SK-N-SH (cell line): ENCODE measurements at regions of chr5 and their contacts with region 1.

Region 1: GRCh38 chr5:140840978-140841959 is at the start of gene PCDHA8:
- DNase-seq: peak; percentile 83
- H3K4me3 ChIP-seq: peak within 1 kb of the TSS; percentile 66 to 96
- H3K27ac ChIP-seq: peak within 1 kb of the TSS in 1 of 2 experiments; percentile 50; a peak in 1 of 4 replicates
- H3K4me1 ChIP-seq: no peaks in the 10 kb centered on the region
- H3K27me3 ChIP-seq: no peaks in the 10 kb centered on the region
- CTCF ChIP-seq: peak; percentile 87
- EP300 ChIP-seq: no peak
- RAD21 ChIP-seq: peak; percentile 92
- polyA plus RNA-seq, gene PCDHA8: 0.54 and 0.63 TPM in 2 replicates

Region 2: DNA sequence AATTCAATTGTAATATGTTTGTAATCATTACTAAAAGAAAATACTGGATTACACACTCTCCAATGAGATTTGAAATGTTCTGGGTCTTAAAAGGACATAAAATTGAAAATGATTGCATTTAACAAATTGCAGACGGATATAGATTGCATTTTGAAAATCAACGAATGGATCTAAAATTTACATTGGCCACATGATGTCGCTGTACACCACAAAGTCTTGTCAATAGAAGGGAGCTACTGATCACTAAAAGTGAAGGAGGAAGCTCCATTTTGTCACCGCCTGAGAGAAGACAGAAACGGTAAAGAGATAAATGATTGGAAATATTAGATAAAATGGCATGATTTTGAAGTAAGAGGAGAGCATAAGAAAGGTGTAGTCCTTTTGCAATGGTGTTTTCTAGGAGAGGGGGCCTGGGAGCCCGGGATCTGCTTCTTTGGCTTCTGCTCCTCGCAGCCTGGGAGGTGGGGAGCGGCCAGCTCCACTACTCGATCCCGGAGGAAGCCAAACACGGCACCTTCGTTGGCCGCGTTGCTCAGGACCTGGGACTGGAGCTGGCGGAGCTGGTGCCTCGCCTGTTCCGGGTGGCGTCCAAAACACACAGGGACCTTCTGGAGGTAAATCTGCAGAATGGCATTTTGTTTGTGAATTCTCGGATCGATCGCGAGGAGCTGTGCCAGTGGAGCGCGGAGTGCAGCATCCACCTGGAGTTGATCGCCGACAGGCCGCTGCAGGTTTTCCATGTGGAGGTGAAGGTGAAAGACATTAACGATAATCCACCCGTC is 55.2 kb before region 1 on chr5 and contains the start of gene PCDHA1:
- CTCF ChIA-PET with region 1: interaction called, 28 read pairs
- POLR2A ChIA-PET with region 1: no interaction called
- DNase-seq: peak; percentile 36
- H3K4me3 ChIP-seq: peak within 1 kb of the TSS in 1 of 2 experiments; percentile 31; a peak in 2 of 4 replicates
- H3K27ac ChIP-seq: no peak within 1 kb of the TSS
- H3K4me1 ChIP-seq: no peaks in the 10 kb centered on the region
- H3K27me3 ChIP-seq: no peaks in the 10 kb centered on the region
- CTCF ChIP-seq: peak; percentile 29
- EP300 ChIP-seq: no peak
- RAD21 ChIP-seq: peak; percentile 47
- polyA plus RNA-seq, gene PCDHA1: 0.16 and 0.21 TPM in 2 replicates

Region 3: GRCh38 chr5:140821375-140822280 is 19.6 kb before region 1 on chr5 and contains the start of gene PCDHA5:
- CTCF ChIA-PET with region 1: interaction called, 21 read pairs
- POLR2A ChIA-PET with region 1: no interaction called
- DNase-seq: no peak
- H3K4me3 ChIP-seq: no peak within 1 kb of the TSS
- H3K27ac ChIP-seq: no peak within 1 kb of the TSS
- H3K4me1 ChIP-seq: no peaks in the 10 kb centered on the region
- H3K27me3 ChIP-seq: no peaks in the 10 kb centered on the region
- CTCF ChIP-seq: no peak
- EP300 ChIP-seq: no peak
- RAD21 ChIP-seq: no peak
- polyA plus RNA-seq, gene PCDHA5: 0.02 TPM in 2 replicates

Region 4: DNA sequence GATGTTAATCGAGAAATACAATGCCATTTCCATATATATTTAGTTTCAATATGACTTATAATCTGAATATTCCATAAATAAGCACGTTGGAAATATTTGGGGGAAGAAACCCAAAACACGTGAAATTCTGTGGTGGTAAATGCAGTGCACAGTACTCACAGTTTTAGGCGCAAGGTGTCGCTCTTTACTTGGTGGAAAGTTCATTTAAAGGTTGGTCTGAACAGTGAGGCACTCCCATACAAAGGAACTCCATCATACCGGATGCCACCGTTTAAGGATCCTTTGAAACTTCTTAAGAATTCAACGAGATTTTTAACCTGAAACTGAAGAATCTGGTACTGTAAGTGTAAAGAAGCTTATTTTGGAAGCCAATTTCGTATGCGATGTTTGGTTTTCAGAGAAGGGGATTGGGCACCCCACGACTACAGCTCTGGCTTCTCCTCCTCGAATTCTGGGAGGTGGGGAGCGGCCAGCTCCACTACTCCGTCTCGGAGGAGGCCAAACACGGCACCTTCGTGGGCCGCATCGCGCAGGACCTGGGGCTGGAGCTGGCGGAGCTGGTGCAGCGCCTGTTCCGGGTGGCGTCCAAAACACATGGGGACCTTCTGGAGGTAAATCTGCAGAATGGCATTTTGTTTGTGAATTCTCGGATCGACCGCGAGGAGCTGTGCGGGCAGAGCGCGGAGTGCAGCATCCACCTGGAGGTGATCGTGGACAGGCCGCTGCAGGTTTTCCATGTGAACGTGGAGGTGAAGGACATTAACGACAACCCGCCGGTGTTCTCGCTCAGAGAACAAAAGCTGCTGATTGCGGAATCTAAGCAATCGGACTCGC is 27.7 kb after region 1 on chr5 and contains the start of gene PCDHA11:
- CTCF ChIA-PET with region 1: interaction called, 132 read pairs
- POLR2A ChIA-PET with region 1: no interaction called
- DNase-seq: no peak
- H3K4me3 ChIP-seq: no peak within 1 kb of the TSS
- H3K27ac ChIP-seq: no peak within 1 kb of the TSS
- H3K4me1 ChIP-seq: no peaks in the 10 kb centered on the region
- H3K27me3 ChIP-seq: no peaks in the 10 kb centered on the region
- CTCF ChIP-seq: no peak
- EP300 ChIP-seq: no peak
- RAD21 ChIP-seq: no peak
- polyA plus RNA-seq, gene PCDHA11: not detected in 2 replicates

Region 5: DNA sequence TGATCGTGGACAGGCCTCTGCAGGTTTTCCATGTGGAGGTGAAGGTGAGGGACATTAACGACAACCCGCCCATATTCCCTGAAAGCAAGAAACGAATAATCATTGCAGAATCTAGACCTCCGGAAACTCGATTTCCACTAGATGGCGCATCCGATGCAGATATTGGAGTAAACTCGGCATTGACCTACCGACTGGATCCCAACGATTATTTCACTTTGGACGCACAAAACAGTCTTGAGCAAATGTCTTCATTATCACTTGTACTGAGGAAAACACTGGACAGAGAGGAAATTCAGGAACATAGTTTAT is 41.3 kb after region 1 on chr5:
- CTCF ChIA-PET with region 1: interaction called, 13 read pairs
- POLR2A ChIA-PET with region 1: no interaction called
- DNase-seq: peak; percentile 43
- H3K4me3 ChIP-seq: no peak overlapping the region
- H3K27ac ChIP-seq: no peak overlapping the region
- H3K4me1 ChIP-seq: no peaks in the 10 kb centered on the region; a peak in 1 of 4 replicates
- H3K27me3 ChIP-seq: no peaks in the 10 kb centered on the region
- CTCF ChIP-seq: no peak; the same call in 1 of the 2 replicates
- EP300 ChIP-seq: no peak
- RAD21 ChIP-seq: peak; percentile 49

Region 6: GRCh38 chr5:140966293-140967225 is 125.3 kb after region 1 on chr5 and contains the start of gene PCDHAC2:
- CTCF ChIA-PET with region 1: interaction called, 28 read pairs
- POLR2A ChIA-PET with region 1: interaction called, 3 read pairs
- DNase-seq: peak; percentile 83
- H3K4me3 ChIP-seq: peak within 1 kb of the TSS; percentile 64 to 75
- H3K27ac ChIP-seq: peak within 1 kb of the TSS in 1 of 2 experiments; percentile 94; a peak in 2 of 4 replicates
- H3K4me1 ChIP-seq: peaks cover 8 to 41% of the 10 kb centered on the region in 2 experiments; a peak in 3 of 4 replicates
- H3K27me3 ChIP-seq: no peaks in the 10 kb centered on the region
- CTCF ChIP-seq: no peak
- EP300 ChIP-seq: no peak
- RAD21 ChIP-seq: no peak
- polyA plus RNA-seq, gene PCDHAC2: 0.39 and 0.76 TPM in 2 replicates

Region 7: DNA sequence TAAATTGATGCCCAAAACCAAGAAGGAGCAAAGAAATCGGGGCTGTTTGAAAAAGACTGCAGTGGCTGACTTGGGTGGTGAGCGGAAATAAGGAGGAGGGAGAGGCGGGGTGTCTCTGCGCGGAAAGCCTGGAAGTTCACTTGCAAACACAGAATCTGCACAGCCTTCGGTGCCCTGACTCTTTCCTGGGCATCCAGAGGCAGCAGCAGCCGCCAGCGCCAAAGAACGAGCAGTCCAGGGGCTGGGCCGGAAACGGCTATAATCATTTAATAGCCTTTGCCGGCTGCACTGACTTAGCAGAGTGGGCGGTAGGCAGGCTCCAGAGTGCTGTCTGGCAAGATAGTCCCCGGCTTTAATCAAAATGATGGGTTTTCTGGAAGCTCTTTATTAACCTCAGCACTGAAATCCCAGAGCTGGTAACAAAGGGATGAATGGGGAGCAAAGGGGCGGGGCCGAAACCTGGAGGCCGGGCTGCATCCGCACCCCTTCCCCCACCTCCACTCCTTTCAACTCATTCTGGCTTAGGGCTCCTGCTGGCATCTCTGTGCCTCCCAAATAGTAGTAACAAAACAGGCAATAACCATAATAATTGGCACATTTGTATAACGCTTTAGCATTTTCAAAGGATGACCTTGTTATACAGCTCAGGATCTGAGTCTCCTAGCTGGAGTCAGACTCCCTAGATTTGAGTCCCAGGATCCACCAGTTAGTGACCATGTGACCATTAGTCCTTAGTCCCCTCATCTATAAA is 160.8 kb after region 1 on chr5:
- CTCF ChIA-PET with region 1: interaction called, 10 read pairs
- POLR2A ChIA-PET with region 1: interaction called, 3 read pairs
- DNase-seq: peak; percentile 77
- H3K4me3 ChIP-seq: peak overlapping the region; percentile 47 to 59
- H3K27ac ChIP-seq: peak overlapping the region in 1 of 2 experiments; percentile 100; a peak in 3 of 4 replicates
- H3K4me1 ChIP-seq: peaks cover 25 to 28% of the 10 kb centered on the region in 2 experiments; a peak in 3 of 4 replicates
- H3K27me3 ChIP-seq: no peaks in the 10 kb centered on the region
- CTCF ChIP-seq: no peak
- EP300 ChIP-seq: peak in 1 of 2 experiments; percentile 78; a peak in 2 of 4 replicates
- RAD21 ChIP-seq: peak; percentile 29; the same call in 1 of the 2 replicates